ENCODE measurements at regions of chr6 and their contacts with region 1.

Region 1: GRCh38 chr6:16409531-16410441 is 171.4 kb downstream of the GMPR start:
- DNase-seq: peak in 2 of 4 donors; percentile 54 to 57
- ATAC-seq: peak; percentile 84
- H3K4me3 ChIP-seq: no peak overlapping the region
- H3K27ac ChIP-seq: no peak overlapping the region
- H3K4me1 ChIP-seq: peaks cover 0 to 30% of the 10 kb centered on the region in 2 donors
- H3K27me3 ChIP-seq: no peaks in the 10 kb centered on the region
- CTCF ChIP-seq: peak; percentile 64 to 73

Region 2: DNA sequence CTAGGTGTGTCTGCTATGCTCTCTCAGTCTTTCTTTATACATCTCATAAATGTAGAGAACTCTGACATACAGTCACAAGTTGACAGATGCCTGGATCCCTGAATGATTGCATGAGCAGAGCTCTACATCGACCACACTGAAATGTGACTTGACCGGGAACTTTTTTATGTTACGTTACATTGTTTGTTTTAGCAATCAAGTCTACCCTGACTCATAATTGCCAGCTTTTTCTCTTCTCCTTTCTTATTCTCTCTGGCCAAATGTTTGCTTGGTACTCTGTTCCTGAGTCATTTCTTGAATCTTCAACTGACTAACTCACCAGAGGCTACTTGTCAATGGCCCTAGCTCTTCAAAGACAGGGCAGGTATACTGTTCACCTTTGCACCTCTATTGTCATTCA is 533.4 kb before region 1 on chr6:
- intact Hi-C with region 1: no loop called
- DNase-seq: no peak
- ATAC-seq: peak; percentile 71
- H3K4me3 ChIP-seq: no peak overlapping the region
- H3K27ac ChIP-seq: no peak overlapping the region
- H3K4me1 ChIP-seq: peaks cover 3 to 48% of the 10 kb centered on the region in 2 donors
- H3K27me3 ChIP-seq: no peaks in the 10 kb centered on the region
- CTCF ChIP-seq: no peak

Region 3: DNA sequence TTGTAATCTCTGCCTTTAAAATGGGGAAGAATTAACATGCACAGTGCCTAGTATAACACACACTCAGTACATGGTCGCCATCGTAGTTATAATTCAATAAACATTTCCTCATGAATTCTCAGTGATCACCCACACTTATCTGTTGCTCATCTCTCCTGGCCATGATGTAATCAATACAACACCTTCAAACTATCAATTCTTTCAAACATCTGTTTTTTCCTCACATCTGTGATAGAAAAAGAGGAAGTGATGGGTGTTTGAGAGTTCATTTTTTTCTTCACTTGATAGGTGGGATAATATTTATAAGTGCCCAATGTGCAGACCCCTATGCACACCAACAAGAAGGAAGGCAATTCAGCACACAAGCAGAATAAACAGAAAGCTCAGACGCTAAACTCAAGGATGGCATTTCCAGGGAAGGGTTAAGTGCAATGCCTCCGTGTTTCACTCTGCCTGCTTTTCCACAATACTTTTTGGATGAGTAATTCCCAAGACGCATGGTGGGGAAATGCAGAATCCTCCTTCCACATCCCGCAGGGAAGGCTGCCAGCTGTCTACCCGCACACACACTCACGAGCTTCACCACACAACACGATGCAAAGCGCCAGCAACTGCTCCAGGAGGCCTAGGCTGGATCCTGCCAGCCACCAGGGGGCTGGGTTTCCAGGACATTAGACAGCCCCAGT is 71.1 kb before region 1 on chr6:
- intact Hi-C with region 1: loop called in 1 of 2 experiments (anchors 5 kb)
- DNase-seq: peak in 2 of 4 donors; percentile 50 to 79
- ATAC-seq: peak; percentile 53
- H3K4me3 ChIP-seq: no peak overlapping the region
- H3K27ac ChIP-seq: peak overlapping the region in 1 of 2 donors; percentile 20
- H3K4me1 ChIP-seq: peaks cover 4 to 50% of the 10 kb centered on the region in 2 donors
- H3K27me3 ChIP-seq: no peaks in the 10 kb centered on the region
- CTCF ChIP-seq: peak in 1 of 2 donors; percentile 47